PC-9 (cell line): ENCODE measurements at regions of chr13 and their contacts with region 1.

Region 1: GRCh38 chr13:47168066-47168465 is 271.2 kb upstream of the HTR2A start:
- DNase-seq: no peak
- H3K4me3 ChIP-seq: no peak overlapping the region
- H3K27ac ChIP-seq: no peak overlapping the region
- H3K4me1 ChIP-seq: no peaks in the 10 kb centered on the region
- H3K27me3 ChIP-seq: no peaks in the 10 kb centered on the region
- CTCF ChIP-seq: no peak

Region 2: DNA sequence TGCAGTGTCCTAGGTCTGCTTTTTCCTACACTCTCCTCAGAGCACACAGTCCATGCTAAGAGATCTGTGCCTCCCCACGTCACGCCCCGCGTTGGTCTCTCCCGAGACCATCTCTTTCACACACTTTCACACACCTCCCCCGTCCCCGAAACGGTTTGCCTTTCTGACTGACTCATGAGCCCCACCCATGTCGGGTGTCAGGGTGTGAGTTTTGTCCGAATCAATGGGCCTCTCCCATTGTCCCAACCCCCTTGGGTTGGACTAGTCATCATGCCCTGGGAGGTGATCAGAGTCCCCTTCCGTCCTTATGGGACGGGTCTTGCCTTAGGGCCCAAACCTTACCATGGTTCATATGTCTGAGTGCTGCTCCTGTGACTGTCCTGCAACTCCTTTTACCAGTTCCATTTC is 57.2 kb before region 1 on chr13:
- CTCF ChIA-PET with region 1: no interaction called
- POLR2A ChIA-PET with region 1: no interaction called
- intact Hi-C with region 1: loop called (anchors 2 kb)
- DNase-seq: peak in 1 of 2 experiments; percentile 31
- H3K4me3 ChIP-seq: no peak overlapping the region
- H3K27ac ChIP-seq: 0 out of 2 replicates have a peak overlapping the region, but pooled peaks have one; percentile 35
- H3K4me1 ChIP-seq: 0 out of 2 replicates have a peak, but pooled peaks cover 7% of the 10 kb centered on the region
- H3K27me3 ChIP-seq: no peaks in the 10 kb centered on the region
- CTCF ChIP-seq: no peak

Region 3: DNA sequence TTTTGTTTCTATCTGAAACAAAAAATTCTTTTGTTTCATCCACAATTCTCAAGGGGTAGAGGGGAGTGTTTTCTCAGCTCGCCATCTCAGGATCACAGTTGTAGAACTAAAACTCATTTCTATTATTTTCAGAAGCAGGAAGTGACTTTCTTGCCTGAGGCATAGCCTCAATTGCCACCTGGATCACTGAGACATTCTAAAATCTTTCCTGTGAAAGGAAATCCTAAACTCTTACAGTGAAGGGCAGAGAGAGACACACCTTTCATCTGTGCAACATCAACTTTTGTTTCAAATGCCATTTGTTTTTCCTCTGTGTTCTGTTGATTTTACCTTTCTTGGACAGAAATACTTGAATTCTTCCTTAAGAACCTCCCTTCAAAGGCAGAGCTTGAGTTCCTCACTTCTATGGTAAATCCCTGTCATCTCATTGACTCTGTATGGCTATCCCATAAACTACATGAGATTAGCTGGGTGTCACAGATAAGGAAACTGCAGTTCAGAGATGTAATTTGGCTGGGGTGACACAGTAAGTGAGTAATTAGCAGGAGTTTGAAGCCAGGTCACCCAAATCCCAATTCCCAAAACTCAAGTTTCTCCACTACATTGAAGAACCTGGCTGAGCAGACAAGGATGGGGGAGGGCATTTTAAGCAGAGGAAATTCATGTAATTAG is 46.8 kb before region 1 on chr13:
- CTCF ChIA-PET with region 1: no interaction called
- POLR2A ChIA-PET with region 1: interaction called, 31 read pairs
- intact Hi-C with region 1: no loop called
- DNase-seq: no peak
- H3K4me3 ChIP-seq: no peak overlapping the region
- H3K27ac ChIP-seq: no peak overlapping the region
- H3K4me1 ChIP-seq: no peaks in the 10 kb centered on the region
- H3K27me3 ChIP-seq: no peaks in the 10 kb centered on the region
- CTCF ChIP-seq: no peak